ENCODE measurements at regions of chr9 and their contacts with region 1.

Region 1: GRCh38 chr9:71783120-71783530 is 14.8 kb upstream of the CEMIP2 start:
- DNase-seq: no peak
- H3K4me3 ChIP-seq: no peak overlapping the region
- CTCF ChIP-seq: no peak

Region 2: GRCh38 chr9:71725590-71726338 is 57.4 kb before region 1 on chr9:
- in situ Hi-C with region 1: no loop called
- DNase-seq: no peak
- H3K4me3 ChIP-seq: no peak overlapping the region
- CTCF ChIP-seq: no peak

Region 3: DNA sequence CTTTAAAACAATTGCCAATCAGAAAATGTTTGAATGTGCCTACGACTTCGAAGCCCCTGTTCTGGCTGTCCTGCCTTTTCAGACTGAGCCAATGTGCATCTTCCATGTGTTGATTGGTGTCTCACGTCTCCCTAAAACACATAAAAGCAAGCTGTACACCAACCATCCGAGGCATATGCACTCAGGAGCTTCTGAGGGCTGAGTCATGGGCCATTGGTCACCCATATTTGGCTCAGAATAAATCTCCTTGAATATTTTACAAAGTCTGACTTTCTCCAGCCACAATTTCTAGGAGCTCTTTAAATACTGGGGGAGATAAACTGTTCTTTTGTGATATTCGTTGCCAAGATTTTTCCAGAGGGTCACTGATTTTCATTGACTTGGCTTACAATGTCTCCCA is 223.4 kb after region 1 on chr9:
- in situ Hi-C with region 1: no loop called
- DNase-seq: no peak
- H3K4me3 ChIP-seq: no peak overlapping the region
- CTCF ChIP-seq: no peak

Region 4: GRCh38 chr9:72271613-72272478 is 488.7 kb after region 1 on chr9:
- in situ Hi-C with region 1: loop called (anchors 25 kb)
- DNase-seq: peak; percentile 33
- H3K4me3 ChIP-seq: no peak overlapping the region
- CTCF ChIP-seq: peak; percentile 89

Measured in astrocyte of the cerebellum (primary cell).